Posterior vena cava (tissue), 2 donors: ENCODE measurements at regions of chr13 and their contacts with region 1.

Region 1: GRCh38 chr13:35565273-35565672 is 88.8 kb upstream of the MAB21L1 start:
- DNase-seq: no peak

Region 2: GRCh38 chr13:35631666-35632065 is 66.4 kb after region 1 on chr13:
- intact Hi-C with region 1: loop called in 1 of 2 experiments (anchors 2 kb)
- DNase-seq: no peak